ENCODE measurements at regions of chr10 and their contacts with region 1.

Region 1: DNA sequence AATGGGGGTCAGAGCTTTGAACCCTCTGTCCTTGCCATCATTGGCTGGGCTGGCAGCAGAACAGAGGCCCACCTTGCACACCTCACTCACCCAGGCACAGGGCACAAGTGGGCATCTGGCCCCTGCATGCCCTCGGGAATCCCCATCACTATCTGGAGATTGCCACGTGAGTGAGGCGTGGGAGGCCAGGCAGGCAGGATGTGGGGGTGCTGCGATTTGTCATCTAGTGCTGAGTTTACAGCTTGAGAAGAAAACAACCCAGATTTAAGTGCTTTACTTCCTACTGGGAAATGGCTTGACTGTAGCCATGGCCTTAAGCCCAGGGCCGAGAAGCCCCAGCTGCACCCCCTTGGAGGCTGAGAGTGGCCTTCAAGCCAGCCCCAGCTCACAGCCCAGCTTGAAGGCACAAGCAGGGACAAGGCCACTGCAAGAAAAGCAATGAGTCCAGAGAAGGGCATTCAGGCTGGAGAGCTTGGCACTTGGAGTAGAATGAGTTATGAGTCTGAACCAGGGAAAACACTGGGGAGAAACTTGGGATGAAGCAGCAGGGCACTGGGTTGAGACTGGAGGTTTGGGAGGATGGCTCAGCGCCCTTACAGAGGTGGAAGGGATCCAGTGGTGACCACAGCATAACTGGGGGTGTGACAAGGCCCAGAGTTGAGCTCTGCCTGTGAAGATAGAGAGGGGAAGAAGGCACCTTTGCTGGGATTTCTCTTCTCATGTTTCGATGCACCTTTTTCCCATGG is 123.0 kb downstream of the CXCL12 start:
- DNase-seq: peak; percentile 55
- ATAC-seq: peak; percentile 68
- H3K4me3 ChIP-seq: no peak overlapping the region
- H3K27ac ChIP-seq: peak overlapping the region; percentile 68
- H3K4me1 ChIP-seq: peaks cover 56% of the 10 kb centered on the region
- H3K27me3 ChIP-seq: no peaks in the 10 kb centered on the region
- CTCF ChIP-seq: no peak
- EP300 ChIP-seq: 0 out of 4 replicates have a peak, but pooled peaks have one; percentile 12 to 22
- POLR2A ChIP-seq: no peak
- RAD21 ChIP-seq: no peak

Region 2: DNA sequence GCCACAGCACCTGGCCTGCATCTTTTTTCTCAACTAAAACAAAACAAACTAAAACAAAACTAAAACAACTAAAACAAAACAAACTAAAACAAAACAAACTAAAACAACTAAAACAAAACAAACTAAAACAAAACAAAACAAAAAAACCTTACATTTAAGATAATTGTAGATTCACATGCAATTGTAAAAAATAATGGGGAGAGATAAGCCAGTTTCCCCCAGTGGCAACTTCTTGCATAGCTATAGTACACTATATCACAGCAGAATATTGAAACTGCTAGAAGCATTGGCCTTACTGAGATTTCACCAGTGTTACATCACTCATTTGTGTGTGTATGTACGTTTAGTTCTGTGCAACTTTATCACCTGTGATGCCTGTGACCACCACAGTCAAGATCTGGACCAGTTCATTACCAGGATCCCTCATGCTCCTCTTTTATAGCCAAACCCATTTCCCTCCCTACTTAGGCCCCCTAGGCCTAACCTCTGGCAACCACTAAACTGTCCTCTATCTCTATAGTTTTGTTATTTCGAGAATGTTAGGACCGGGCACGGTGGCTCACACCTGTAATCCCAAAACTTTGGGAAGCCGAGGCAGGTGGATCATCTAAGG is 881.2 kb before region 1 on chr10:
- CTCF ChIA-PET with region 1: no interaction called
- POLR2A ChIA-PET with region 1: no interaction called
- RAD21 ChIA-PET with region 1: no interaction called
- SMC1A ChIA-PET with region 1: no interaction called
- in situ Hi-C with region 1: no loop called
- intact Hi-C with region 1: no loop called
- DNase-seq: no peak
- ATAC-seq: peak; percentile 53
- H3K4me3 ChIP-seq: no peak overlapping the region
- H3K27ac ChIP-seq: no peak overlapping the region
- H3K4me1 ChIP-seq: no peaks in the 10 kb centered on the region
- H3K27me3 ChIP-seq: no peaks in the 10 kb centered on the region
- CTCF ChIP-seq: peak in 2 of 3 experiments; percentile 12 to 16; a peak in 1 of 6 replicates
- EP300 ChIP-seq: no peak
- POLR2A ChIP-seq: no peak
- RAD21 ChIP-seq: no peak

Region 3: DNA sequence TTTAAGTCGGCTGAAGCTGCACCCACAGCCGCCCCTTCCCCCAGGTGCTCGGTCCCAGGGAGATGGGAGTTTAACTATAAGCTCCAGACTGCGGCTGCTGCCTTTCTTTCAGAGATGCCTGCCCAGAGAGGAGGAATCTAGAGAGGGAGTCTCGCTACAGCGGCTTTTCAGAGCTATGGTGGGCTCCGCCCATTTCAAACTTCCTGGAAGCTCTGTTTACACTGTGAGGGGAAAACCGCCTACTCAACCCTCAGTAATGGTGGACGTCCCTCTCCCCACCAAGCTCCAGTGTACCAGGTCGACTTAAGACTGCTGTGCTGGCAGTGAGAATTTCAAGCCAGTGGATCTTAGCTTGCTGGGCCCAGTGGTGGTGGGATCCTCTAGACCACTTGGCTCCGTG is 12.4 kb before region 1 on chr10:
- CTCF ChIA-PET with region 1: interaction called, 4 read pairs
- POLR2A ChIA-PET with region 1: no interaction called
- RAD21 ChIA-PET with region 1: interaction called, 17 read pairs
- SMC1A ChIA-PET with region 1: interaction called, 10 read pairs
- in situ Hi-C with region 1: no loop called
- intact Hi-C with region 1: no loop called
- DNase-seq: no peak
- ATAC-seq: no peak
- H3K4me3 ChIP-seq: no peak overlapping the region
- H3K27ac ChIP-seq: no peak overlapping the region
- H3K4me1 ChIP-seq: no peaks in the 10 kb centered on the region
- H3K27me3 ChIP-seq: no peaks in the 10 kb centered on the region
- CTCF ChIP-seq: no peak
- EP300 ChIP-seq: no peak
- POLR2A ChIP-seq: no peak
- RAD21 ChIP-seq: no peak

Region 4: GRCh38 chr10:44310762-44311562 is 49.1 kb after region 1 on chr10:
- CTCF ChIA-PET with region 1: interaction called, 3 read pairs
- POLR2A ChIA-PET with region 1: no interaction called
- RAD21 ChIA-PET with region 1: interaction called, 4 read pairs
- SMC1A ChIA-PET with region 1: interaction called, 19 read pairs
- in situ Hi-C with region 1: no loop called
- intact Hi-C with region 1: no loop called
- DNase-seq: no peak
- ATAC-seq: peak; percentile 88
- H3K4me3 ChIP-seq: no peak overlapping the region; the same call in 1 of the 2 replicates
- H3K27ac ChIP-seq: no peak overlapping the region
- H3K4me1 ChIP-seq: peaks cover 29% of the 10 kb centered on the region
- H3K27me3 ChIP-seq: no peaks in the 10 kb centered on the region
- CTCF ChIP-seq: peak; percentile 65 to 84 (median 66); a peak in 5 of 6 replicates
- EP300 ChIP-seq: no peak
- POLR2A ChIP-seq: peak; percentile 51; the same call in 1 of the 2 replicates
- RAD21 ChIP-seq: peak; percentile 49

Region 5: DNA sequence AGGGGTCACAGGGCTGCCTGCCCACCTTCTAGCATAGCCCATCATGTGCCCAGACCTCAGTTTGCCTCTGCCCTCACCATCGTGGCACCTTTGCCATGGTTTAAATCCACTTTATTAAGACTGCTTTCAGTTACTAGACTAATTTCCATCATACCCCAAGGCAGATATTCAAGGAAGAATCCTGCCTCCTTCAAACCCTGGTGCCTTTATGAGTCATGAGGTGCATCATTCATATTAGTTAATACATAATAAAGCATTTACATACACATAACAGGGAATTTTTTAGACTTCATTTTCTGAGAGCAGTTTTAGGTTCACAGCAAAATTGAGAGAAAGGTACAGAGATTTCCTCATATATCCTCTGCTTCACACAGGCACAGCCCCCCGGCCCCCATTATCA is 60.3 kb after region 1 on chr10:
- CTCF ChIA-PET with region 1: no interaction called
- POLR2A ChIA-PET with region 1: no interaction called
- RAD21 ChIA-PET with region 1: no interaction called
- SMC1A ChIA-PET with region 1: no interaction called
- in situ Hi-C with region 1: no loop called
- intact Hi-C with region 1: no loop called
- DNase-seq: no peak
- ATAC-seq: no peak
- H3K4me3 ChIP-seq: no peak overlapping the region
- H3K27ac ChIP-seq: no peak overlapping the region
- H3K4me1 ChIP-seq: no peaks in the 10 kb centered on the region
- H3K27me3 ChIP-seq: no peaks in the 10 kb centered on the region
- CTCF ChIP-seq: no peak
- EP300 ChIP-seq: no peak
- POLR2A ChIP-seq: no peak
- RAD21 ChIP-seq: no peak

Measured in GM12878 (cell line).